Activated T-helper 1 cell treated with anti-CD3 and anti-CD28 coated beads, Interleukin-12 subunit alpha, Interleukin-12 subunit beta, Interleukin-2, Interleukin-4 antibody, amounts not matched to agents 30 ng/mL and 10 ng/mL and 1 ng/mL, durations not matched to agents 14 hours and 24 hours and 36 hours (primary cell): ENCODE measurements at regions of chr15 and their contacts with region 1.

Region 1: GRCh38 chr15:90931737-90932659 is at the start of gene HDDC3:
- DNase-seq: peak; percentile 87
- H3K4me3 Mint-ChIP-seq: peak within 1 kb of the TSS; percentile 99
- H3K27ac Mint-ChIP-seq: peak within 1 kb of the TSS; percentile 99
- H3K4me1 Mint-ChIP-seq: peaks cover 69% of the 10 kb centered on the region
- H3K27me3 Mint-ChIP-seq: no peaks in the 10 kb centered on the region
- total RNA-seq, gene HDDC3: 38.8 and 39.0 TPM in 2 replicates

Region 2: DNA sequence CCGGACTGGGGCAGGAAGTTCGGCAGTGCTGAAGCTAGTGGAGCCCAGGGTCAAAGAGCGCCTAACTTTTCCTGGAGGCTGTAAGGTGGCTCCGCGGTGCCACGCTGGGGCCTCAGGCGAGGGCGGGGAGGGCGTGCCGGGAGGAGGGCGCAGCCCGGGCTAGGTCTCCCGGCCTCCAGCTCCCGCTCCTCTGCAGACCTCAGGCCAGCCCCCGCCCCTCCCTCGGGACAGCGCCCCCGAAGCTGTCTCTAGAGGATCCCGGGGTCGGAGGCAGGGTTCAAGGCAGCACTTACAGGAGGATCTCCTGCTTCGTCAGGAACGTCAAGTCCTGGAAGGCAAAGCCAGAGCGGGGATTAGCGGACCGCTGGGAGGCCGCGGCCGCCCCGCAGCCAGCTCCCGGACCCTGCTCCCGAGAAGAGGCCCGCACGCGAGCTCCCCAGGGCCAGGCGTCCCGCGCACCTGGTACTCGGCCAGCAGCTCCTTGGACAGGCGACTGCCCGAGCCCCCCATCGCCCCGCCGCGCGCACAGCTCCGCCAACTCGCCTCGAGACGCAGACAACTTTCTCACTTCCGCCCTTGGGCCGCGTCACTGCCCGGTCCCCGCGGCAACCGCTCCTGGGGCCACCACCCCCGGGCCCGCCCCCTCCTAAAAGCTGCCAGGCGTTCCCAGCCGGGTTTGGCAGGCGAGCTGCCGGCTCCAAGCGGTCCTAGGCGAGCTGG is 698.5 kb before region 1 on chr15 and contains the start of gene CIB1:
- intact Hi-C with region 1: loop called (anchors 2 kb)
- DNase-seq: peak; percentile 98
- H3K4me3 Mint-ChIP-seq: peak within 1 kb of the TSS; percentile 93
- H3K27ac Mint-ChIP-seq: peak within 1 kb of the TSS; percentile 94
- H3K4me1 Mint-ChIP-seq: peaks cover 57% of the 10 kb centered on the region
- H3K27me3 Mint-ChIP-seq: no peaks in the 10 kb centered on the region
- total RNA-seq, gene CIB1: 144 and 145 TPM in 2 replicates

Region 3: DNA sequence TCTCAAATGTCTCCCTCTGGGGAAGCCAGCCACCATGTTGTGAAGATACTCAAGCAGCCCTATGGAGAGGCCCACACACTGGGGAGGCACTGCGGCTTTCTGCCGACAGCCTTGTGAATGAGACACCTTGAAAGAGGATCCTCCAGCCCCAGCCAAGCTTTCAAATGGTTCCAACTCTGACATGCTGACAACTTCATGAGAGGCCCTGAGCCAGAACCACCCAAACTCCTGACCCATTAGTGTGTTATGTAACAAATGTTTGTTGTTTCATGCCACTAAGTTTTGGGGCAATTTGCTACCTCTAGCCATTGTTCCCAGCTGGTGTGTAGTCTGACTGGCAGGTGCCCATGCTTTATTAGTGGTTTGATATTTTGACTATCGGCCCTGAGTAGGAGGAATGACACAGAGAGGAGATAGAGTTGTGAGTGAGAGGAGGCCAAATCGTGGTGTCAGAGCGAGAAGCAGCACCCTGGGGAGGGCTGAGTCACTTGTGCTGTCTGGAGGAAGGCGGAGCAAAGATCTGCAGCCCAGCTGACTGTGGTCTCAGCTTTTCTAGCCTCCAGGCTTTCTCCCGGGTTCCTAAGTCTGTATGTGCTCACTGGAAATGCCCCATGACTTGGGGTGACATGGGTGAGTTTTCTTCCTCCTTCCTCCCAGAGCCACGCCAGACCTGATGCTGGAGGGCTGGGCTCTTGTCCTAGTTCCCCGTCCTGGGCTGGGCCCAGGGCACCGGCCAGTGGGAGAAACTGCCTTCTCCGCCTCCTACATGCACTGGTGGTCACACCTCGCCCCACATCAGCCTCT is 271.6 kb before region 1 on chr15:
- intact Hi-C with region 1: loop called (anchors 2 kb)
- DNase-seq: peak; percentile 71
- H3K4me3 Mint-ChIP-seq: peak overlapping the region; percentile 77
- H3K27ac Mint-ChIP-seq: peak overlapping the region; percentile 96
- H3K4me1 Mint-ChIP-seq: peaks cover 81% of the 10 kb centered on the region
- H3K27me3 Mint-ChIP-seq: peaks cover 1% of the 10 kb centered on the region

Region 4: DNA sequence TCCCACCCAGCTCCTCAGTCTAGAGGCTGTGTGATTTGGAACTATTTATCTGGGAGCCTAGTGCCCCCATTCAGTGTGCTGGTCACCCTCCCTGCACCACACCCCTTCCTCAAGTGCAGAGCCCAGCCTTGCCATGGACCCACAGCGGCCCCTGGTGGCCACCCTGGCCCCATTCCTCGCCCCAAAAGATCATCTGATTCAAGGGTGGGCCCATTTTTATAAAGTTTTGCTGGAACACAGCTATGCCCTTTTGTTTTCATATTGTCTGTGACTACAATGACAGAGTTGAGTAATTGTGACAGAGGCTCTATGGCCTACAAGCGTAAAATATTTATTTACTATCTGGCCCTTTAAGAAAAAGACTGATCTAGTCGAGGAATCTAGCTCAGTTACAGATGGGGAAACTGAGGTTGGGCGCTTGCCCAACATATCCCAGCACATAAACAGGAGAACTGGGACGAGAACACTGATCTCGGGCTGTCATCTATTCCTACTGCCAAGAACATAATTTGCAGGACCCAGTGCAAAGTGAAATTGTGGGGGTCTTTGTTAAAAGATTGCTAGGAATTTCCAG is 45.9 kb before region 1 on chr15:
- intact Hi-C with region 1: loop called (anchors 5 kb)
- DNase-seq: peak; percentile 66
- H3K4me3 Mint-ChIP-seq: peak overlapping the region; percentile 51
- H3K27ac Mint-ChIP-seq: peak overlapping the region; percentile 87
- H3K4me1 Mint-ChIP-seq: peaks cover 50% of the 10 kb centered on the region
- H3K27me3 Mint-ChIP-seq: no peaks in the 10 kb centered on the region

Region 5: GRCh38 chr15:90994417-90995311 is 62.7 kb after region 1 on chr15 and contains the start of gene PRC1:
- intact Hi-C with region 1: loop called (anchors 2 kb)
- DNase-seq: peak; percentile 99
- H3K4me3 Mint-ChIP-seq: peak within 1 kb of the TSS; percentile 100
- H3K27ac Mint-ChIP-seq: peak within 1 kb of the TSS; percentile 100
- H3K4me1 Mint-ChIP-seq: peaks cover 42% of the 10 kb centered on the region
- H3K27me3 Mint-ChIP-seq: no peaks in the 10 kb centered on the region
- total RNA-seq, gene PRC1: 78.4 and 86.0 TPM in 2 replicates